Heart left ventricle (tissue), 16 donors: ENCODE measurements at regions of chr17 and their contacts with region 1.

Region 1: DNA sequence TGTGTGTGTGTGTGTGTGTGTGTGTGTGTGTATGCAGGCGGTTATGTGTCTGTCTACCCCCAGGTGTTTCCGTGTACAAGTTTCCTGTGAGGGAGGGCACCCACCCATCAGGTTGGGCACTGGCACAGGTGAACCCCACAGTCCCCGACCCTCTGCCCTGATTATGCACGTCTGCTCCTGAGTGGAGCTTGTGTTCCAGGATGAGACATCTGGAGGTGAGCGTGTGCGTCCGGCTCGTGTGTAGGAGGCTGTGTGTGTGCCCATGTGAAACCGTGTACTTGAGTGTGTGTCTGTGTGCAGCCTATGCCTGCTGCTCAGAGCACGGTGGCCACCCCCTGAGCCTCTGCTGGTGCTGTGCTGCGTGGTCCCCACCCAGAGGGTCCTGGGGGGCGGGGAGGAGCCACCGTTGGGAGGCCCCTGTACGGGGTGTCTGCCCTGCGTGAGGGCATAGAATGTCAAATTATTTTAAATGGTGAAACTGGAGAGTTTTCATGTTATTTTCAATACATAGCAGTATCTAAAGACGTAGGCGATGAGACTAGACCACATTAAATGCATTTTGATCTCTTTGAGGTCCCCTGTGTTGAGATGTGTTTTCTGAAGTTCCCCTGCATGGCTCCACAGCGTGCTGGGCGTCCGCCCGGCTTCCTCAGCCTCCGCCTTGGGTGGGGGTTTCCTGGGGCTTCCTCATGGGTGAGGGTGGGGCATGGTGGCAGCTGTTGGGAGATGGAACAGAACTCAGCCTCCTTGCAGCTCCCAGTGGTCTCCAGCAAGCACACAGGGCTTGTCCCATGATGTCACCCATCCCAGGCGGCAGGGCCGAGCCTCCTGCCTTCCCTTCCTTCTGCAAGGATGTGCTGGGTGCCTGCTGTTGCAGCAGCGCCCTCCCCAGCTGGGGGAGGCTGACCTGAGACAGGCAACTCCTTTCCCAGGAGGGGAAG is 43.4 kb downstream of the KCNJ12 start:
- DNase-seq: peak in 1 of 5 donors; percentile 55
- ATAC-seq: peak in 3 of 4 donors; percentile 2 to 27 (median 15)
- H3K4me3 ChIP-seq: no peak overlapping the region
- H3K27ac ChIP-seq: peak overlapping the region in 1 of 12 donors; percentile 27
- H3K4me1 ChIP-seq: peaks cover 0 to 26% (median 2%) of the 10 kb centered on the region in 12 donors
- H3K27me3 ChIP-seq: no peaks in the 10 kb centered on the region
- CTCF ChIP-seq: no peak
- POLR2A ChIP-seq: no peak

Region 2: GRCh38 chr17:21705021-21705601 is 285.5 kb after region 1 on chr17:
- intact Hi-C with region 1: loop called in 1 of 10 experiments (anchors 5 kb)
- DNase-seq: no peak
- ATAC-seq: no peak
- H3K4me3 ChIP-seq: no peak overlapping the region
- H3K27ac ChIP-seq: no peak overlapping the region
- H3K4me1 ChIP-seq: no peaks in the 10 kb centered on the region
- H3K27me3 ChIP-seq: no peaks in the 10 kb centered on the region
- CTCF ChIP-seq: no peak
- POLR2A ChIP-seq: no peak